ENCODE measurements at regions of chr1 and their contacts with region 1.

Region 1: GRCh38 chr1:230149751-230150584 is 82.9 kb downstream of the GALNT2 start:
- DNase-seq: no peak
- ATAC-seq: no peak
- H3K4me3 ChIP-seq: no peak overlapping the region
- H3K27ac ChIP-seq: no peak overlapping the region
- H3K4me1 ChIP-seq: peaks cover 2 to 43% (median 16%) of the 10 kb centered on the region in 4 donors
- H3K27me3 ChIP-seq: no peaks in the 10 kb centered on the region
- CTCF ChIP-seq: no peak
- POLR2A ChIP-seq: no peak

Region 2: DNA sequence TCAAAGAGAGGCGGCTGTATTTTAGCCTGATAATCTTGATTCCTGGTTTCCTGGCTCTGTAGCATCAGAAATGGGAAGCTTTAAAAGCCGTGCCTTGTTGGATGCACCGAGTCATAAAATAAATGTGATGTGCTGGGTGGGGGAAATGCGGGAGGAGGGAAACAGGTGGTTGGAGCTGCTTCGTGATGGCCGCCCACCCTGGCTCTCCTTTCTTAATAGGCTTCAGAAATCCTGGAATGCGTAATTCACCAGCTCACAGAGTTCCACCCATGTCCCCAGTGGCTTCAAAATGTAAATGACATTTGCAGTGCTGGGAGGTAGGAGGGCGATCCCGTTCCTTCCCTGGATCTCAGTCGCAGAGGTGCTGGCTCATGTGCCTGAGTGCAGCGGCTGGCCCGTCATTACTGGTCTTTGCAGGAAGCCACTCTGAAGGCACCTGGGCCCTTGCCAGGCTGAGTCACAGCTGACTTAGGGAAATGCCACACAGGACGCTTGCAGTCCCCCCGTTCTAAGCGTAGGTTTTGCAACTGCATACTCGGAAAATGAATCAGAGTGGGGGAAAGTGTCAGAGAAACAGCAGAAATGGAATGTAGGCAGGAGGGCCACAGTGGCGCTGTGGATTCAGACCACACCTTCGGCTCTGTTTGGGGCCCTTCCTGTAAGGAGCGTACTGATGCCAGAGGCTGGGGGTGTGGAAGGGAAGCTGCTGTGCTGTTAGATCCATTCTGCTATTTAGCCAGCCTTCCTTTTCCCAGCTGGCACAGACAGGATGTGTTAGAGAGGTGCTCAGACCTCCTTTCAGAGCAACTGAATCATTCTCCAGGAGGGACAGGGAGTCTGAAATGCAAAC is 45.3 kb before region 1 on chr1:
- intact Hi-C with region 1: loop called in 1 of 2 experiments (anchors 10 kb)
- DNase-seq: peak; percentile 93 to 97 (median 94)
- ATAC-seq: peak; percentile 67 to 81 (median 78)
- H3K4me3 ChIP-seq: peak overlapping the region in 2 of 3 donors; percentile 12 to 22
- H3K27ac ChIP-seq: peak overlapping the region; percentile 28 to 84 (median 77)
- H3K4me1 ChIP-seq: peaks cover 0 to 54% (median 28%) of the 10 kb centered on the region in 4 donors
- H3K27me3 ChIP-seq: no peaks in the 10 kb centered on the region
- CTCF ChIP-seq: peak in 1 of 4 donors; percentile 25
- POLR2A ChIP-seq: peak; percentile 83

Measured in right lobe of liver (tissue), 6 donors.